ENCODE measurements at regions of chr7 and their contacts with region 1.

Region 1: GRCh38 chr7:32942786-32943653 is 14.2 kb upstream of the FKBP9 start:
- DNase-seq: peak; percentile 31 to 84 (median 62)
- ATAC-seq: peak; percentile 89
- H3K4me3 ChIP-seq: peak overlapping the region; percentile 63
- H3K4me3 Mint-ChIP-seq: peak overlapping the region; percentile 85
- H3K27ac ChIP-seq: no peak overlapping the region
- H3K27ac Mint-ChIP-seq: no peak overlapping the region
- H3K4me1 ChIP-seq: peaks cover 11% of the 10 kb centered on the region
- H3K4me1 Mint-ChIP-seq: peaks cover 11% of the 10 kb centered on the region
- H3K27me3 ChIP-seq: no peaks in the 10 kb centered on the region
- H3K27me3 Mint-ChIP-seq: peaks cover 25% of the 10 kb centered on the region
- CTCF ChIP-seq: peak; percentile 69

Region 2: DNA sequence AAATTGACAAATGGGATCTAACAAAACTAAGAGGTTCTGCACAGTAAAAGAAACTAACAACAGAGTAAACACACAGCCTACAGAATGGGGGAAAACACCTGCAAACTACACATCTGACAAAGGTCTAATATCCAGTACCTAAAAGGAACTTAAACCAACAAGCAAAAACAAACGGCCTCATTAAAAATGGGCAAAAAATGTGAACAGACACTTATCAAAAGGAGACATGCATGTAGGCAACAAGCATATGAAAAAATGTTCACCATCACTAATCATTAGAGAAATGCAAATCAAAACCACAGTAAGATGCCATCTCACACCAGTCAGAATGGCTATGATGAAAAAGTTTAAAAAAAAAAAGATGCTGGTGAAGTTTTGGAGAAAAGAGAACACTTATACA is 248.8 kb before region 1 on chr7:
- CTCF ChIA-PET with region 1: no interaction called
- POLR2A ChIA-PET with region 1: no interaction called
- intact Hi-C with region 1: loop called in 1 of 2 experiments (anchors 10 kb)
- DNase-seq: no peak
- ATAC-seq: no peak
- H3K4me3 ChIP-seq: no peak overlapping the region
- H3K4me3 Mint-ChIP-seq: no peak overlapping the region
- H3K27ac ChIP-seq: no peak overlapping the region
- H3K27ac Mint-ChIP-seq: no peak overlapping the region
- H3K4me1 ChIP-seq: peaks cover 3% of the 10 kb centered on the region
- H3K4me1 Mint-ChIP-seq: peaks cover 10% of the 10 kb centered on the region
- H3K27me3 ChIP-seq: no peaks in the 10 kb centered on the region
- H3K27me3 Mint-ChIP-seq: peaks cover 11% of the 10 kb centered on the region
- CTCF ChIP-seq: no peak

Region 3: DNA sequence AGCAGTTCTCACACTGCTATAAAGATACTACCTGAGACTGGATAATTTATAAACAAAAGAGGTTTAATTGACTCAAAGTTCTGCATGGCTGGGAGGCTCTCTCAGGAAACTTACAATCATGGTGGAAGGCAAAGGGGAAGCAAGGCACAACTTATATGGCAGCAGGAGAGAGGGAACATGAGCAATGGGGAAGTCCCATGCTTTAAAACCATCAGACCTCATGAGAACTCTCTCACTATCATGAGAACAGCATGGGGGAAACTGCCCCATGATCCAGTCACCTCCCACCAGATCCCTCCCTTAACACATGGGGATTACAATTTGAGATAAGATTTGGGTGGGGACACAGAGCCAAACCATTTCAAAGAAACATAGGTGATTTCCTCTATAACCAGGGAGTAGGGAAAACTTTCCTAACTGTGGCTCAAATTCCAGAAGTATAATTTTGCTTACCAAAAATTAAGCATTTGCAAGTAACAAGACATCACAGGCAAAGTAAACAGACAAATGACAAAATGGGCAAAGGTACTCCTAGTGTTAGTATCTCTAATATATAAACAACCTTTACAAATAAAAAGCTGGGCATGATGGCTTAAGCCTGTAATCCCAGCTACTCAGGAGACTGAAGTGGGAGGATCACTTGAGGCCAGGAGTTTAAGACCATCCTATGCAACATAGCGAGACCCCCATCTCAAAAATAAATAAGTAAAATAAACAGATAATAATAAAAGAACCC is 139.4 kb before region 1 on chr7:
- CTCF ChIA-PET with region 1: interaction called, 8 read pairs
- POLR2A ChIA-PET with region 1: no interaction called
- intact Hi-C with region 1: loop called in 1 of 2 experiments (anchors 2 kb)
- DNase-seq: no peak
- ATAC-seq: no peak
- H3K4me3 ChIP-seq: no peak overlapping the region
- H3K4me3 Mint-ChIP-seq: no peak overlapping the region
- H3K27ac ChIP-seq: no peak overlapping the region
- H3K27ac Mint-ChIP-seq: no peak overlapping the region
- H3K4me1 ChIP-seq: peaks cover 3% of the 10 kb centered on the region
- H3K4me1 Mint-ChIP-seq: no peaks in the 10 kb centered on the region
- H3K27me3 ChIP-seq: no peaks in the 10 kb centered on the region
- H3K27me3 Mint-ChIP-seq: peaks cover 7% of the 10 kb centered on the region
- CTCF ChIP-seq: no peak

Region 4: GRCh38 chr7:32905175-32905662 is 37.8 kb before region 1 on chr7:
- CTCF ChIA-PET with region 1: interaction called, 11 read pairs
- POLR2A ChIA-PET with region 1: no interaction called
- intact Hi-C with region 1: loop called in 1 of 2 experiments (anchors 5 kb)
- DNase-seq: peak; percentile 26 to 94 (median 60)
- ATAC-seq: peak; percentile 84
- H3K4me3 ChIP-seq: peak overlapping the region; percentile 39
- H3K4me3 Mint-ChIP-seq: peak overlapping the region; percentile 78
- H3K27ac ChIP-seq: peak overlapping the region; percentile 13 to 82
- H3K27ac Mint-ChIP-seq: peak overlapping the region; percentile 81
- H3K4me1 ChIP-seq: peaks cover 25% of the 10 kb centered on the region
- H3K4me1 Mint-ChIP-seq: peaks cover 12% of the 10 kb centered on the region
- H3K27me3 ChIP-seq: no peaks in the 10 kb centered on the region
- H3K27me3 Mint-ChIP-seq: no peaks in the 10 kb centered on the region
- CTCF ChIP-seq: no peak

Region 5: GRCh38 chr7:33050535-33051318 is 107.7 kb after region 1 on chr7:
- CTCF ChIA-PET with region 1: interaction called, 3 read pairs
- POLR2A ChIA-PET with region 1: no interaction called
- intact Hi-C with region 1: loop called (anchors 5 to 10 kb)
- DNase-seq: peak in 6 of 14 experiments; percentile 4 to 78 (median 60)
- ATAC-seq: peak; percentile 67
- H3K4me3 ChIP-seq: no peak overlapping the region
- H3K4me3 Mint-ChIP-seq: no peak overlapping the region
- H3K27ac ChIP-seq: no peak overlapping the region
- H3K27ac Mint-ChIP-seq: peak overlapping the region; percentile 60
- H3K4me1 ChIP-seq: peaks cover 16% of the 10 kb centered on the region
- H3K4me1 Mint-ChIP-seq: peaks cover 71% of the 10 kb centered on the region
- H3K27me3 ChIP-seq: no peaks in the 10 kb centered on the region
- H3K27me3 Mint-ChIP-seq: no peaks in the 10 kb centered on the region
- CTCF ChIP-seq: peak; percentile 79

Measured in CD4-positive, alpha-beta T cell (primary cell).